ENCODE measurements at regions of chr17 and their contacts with region 1.

Region 1: GRCh38 chr17:75325827-75326225 is 36.6 kb upstream of the SLC25A19 start:
- DNase-seq: no peak
- ATAC-seq: no peak
- H3K4me3 ChIP-seq: no peak overlapping the region
- H3K27ac ChIP-seq: peak overlapping the region; percentile 64
- H3K4me1 ChIP-seq: peaks cover 35% of the 10 kb centered on the region
- H3K27me3 ChIP-seq: no peaks in the 10 kb centered on the region
- CTCF ChIP-seq: no peak; a peak in 1 of 6 replicates
- EP300 ChIP-seq: no peak
- POLR2A ChIP-seq: no peak
- RAD21 ChIP-seq: peak; percentile 34; the same call in 1 of the 2 replicates

Region 2: GRCh38 chr17:75400326-75400939 is 74.6 kb after region 1 on chr17:
- CTCF ChIA-PET with region 1: interaction called, 69 read pairs
- POLR2A ChIA-PET with region 1: interaction called, 11 read pairs
- RAD21 ChIA-PET with region 1: interaction called, 46 read pairs
- SMC1A ChIA-PET with region 1: interaction called, 115 read pairs
- in situ Hi-C with region 1: no loop called
- intact Hi-C with region 1: loop called (anchors 1 kb)
- DNase-seq: no peak
- ATAC-seq: no peak
- H3K4me3 ChIP-seq: peak overlapping the region; percentile 52
- H3K27ac ChIP-seq: no peak overlapping the region
- H3K4me1 ChIP-seq: peaks cover 24% of the 10 kb centered on the region; the same call in 1 of the 2 replicates
- H3K27me3 ChIP-seq: no peaks in the 10 kb centered on the region
- CTCF ChIP-seq: no peak
- EP300 ChIP-seq: no peak
- POLR2A ChIP-seq: no peak
- RAD21 ChIP-seq: no peak

Measured in GM12878 (cell line).